Activated CD4-positive, alpha-beta memory T cell treated with anti-CD3 and anti-CD28 coated beads, Interleukin-2, amount 10 ng/mL, durations not matched to agents 7 days and 5 days (primary cell): ENCODE measurements at regions of chr21 and their contacts with region 1.

Region 1: GRCh38 chr21:31098576-31099005 is 60.3 kb upstream of the KRTAP19-8 start:
- DNase-seq: peak; percentile 75
- H3K4me3 Mint-ChIP-seq: no peak overlapping the region
- H3K27ac Mint-ChIP-seq: no peak overlapping the region
- H3K4me1 Mint-ChIP-seq: peaks cover 26% of the 10 kb centered on the region
- H3K27me3 Mint-ChIP-seq: peaks cover 13% of the 10 kb centered on the region

Region 2: GRCh38 chr21:31151156-31152045 is 52.8 kb after region 1 on chr21:
- CTCF ChIA-PET with region 1: no interaction called
- POLR2A ChIA-PET with region 1: no interaction called
- DNase-seq: no peak
- H3K4me3 Mint-ChIP-seq: no peak overlapping the region
- H3K27ac Mint-ChIP-seq: no peak overlapping the region
- H3K4me1 Mint-ChIP-seq: peaks cover 18% of the 10 kb centered on the region
- H3K27me3 Mint-ChIP-seq: no peaks in the 10 kb centered on the region

Region 3: GRCh38 chr21:31604591-31605190 is 506.1 kb after region 1 on chr21:
- CTCF ChIA-PET with region 1: interaction called, 14 read pairs
- POLR2A ChIA-PET with region 1: no interaction called
- DNase-seq: peak; percentile 75
- H3K4me3 Mint-ChIP-seq: no peak overlapping the region
- H3K27ac Mint-ChIP-seq: no peak overlapping the region
- H3K4me1 Mint-ChIP-seq: peaks cover 3% of the 10 kb centered on the region
- H3K27me3 Mint-ChIP-seq: peaks cover 7% of the 10 kb centered on the region